ENCODE measurements at regions of chr2 and their contacts with region 1.

Region 1: DNA sequence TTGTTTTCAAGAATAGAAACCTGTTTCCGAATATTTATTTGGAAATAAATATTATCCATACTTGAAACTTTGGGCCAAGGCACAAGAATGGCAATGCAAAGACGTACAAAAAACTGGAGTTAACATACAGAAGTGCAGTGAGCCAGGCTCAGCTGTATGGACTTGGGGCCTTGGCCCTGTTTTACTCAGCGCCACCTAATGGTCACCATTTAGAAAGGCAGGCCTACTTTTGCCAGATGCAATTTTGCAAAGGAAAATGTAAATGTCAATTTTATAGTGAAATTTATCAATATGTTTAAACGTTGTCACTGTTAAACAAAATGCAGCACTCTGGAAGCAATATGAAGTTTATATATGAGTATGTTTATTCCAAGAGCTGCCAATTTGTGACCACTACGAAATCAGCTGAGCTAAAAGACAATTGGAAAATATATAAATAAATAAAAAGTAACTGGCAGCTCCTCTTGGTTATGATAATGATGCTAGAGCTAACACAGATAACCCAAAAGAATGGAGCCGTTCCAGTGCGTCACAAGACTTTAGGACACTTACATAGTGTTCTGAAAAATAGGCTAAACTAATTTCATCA is 155.0 kb downstream of the ARHGAP15 start:
- DNase-seq: no peak
- H3K4me3 Mint-ChIP-seq: no peak overlapping the region
- H3K27ac Mint-ChIP-seq: peak overlapping the region; percentile 22
- H3K4me1 Mint-ChIP-seq: peaks cover 13% of the 10 kb centered on the region
- H3K27me3 Mint-ChIP-seq: no peaks in the 10 kb centered on the region

Region 2: DNA sequence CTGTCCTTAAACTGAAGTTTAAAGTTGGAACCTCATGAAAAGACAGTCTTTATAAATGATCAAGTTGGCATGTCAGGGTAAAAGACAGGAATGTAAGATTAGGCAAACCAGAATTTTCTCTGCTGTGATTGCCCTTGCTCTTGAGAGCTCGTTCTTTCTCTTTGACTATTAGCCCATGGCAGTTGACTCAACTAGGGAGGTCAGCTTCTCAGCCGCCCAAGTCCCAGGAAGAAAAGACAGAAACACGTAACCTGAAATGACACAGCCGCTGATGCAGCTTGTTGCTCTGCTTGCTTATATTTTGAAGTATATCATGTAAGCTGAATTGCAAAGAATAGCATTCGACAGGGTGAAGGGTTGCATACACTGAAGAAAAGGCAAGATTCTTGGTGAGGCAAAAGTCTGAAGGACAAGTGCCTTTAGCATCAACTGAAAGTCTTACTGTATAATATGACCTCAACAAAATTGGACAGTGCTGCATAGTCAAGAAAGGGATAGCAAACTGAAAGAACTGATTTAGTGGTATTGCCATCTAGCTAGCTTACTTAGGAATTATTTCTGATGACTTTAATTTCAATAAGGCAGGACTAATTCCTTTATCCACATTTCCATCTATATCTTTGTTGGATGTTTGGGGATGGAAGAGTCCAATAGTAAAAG is 100.2 kb before region 1 on chr2:
- CTCF ChIA-PET with region 1: no interaction called
- POLR2A ChIA-PET with region 1: no interaction called
- DNase-seq: no peak
- H3K4me3 Mint-ChIP-seq: no peak overlapping the region
- H3K27ac Mint-ChIP-seq: no peak overlapping the region
- H3K4me1 Mint-ChIP-seq: peaks cover 23% of the 10 kb centered on the region
- H3K27me3 Mint-ChIP-seq: no peaks in the 10 kb centered on the region

Region 3: GRCh38 chr2:143264851-143265250 is 19.3 kb before region 1 on chr2:
- CTCF ChIA-PET with region 1: interaction called, 19 read pairs
- POLR2A ChIA-PET with region 1: interaction called, 12 read pairs
- DNase-seq: no peak
- H3K4me3 Mint-ChIP-seq: no peak overlapping the region
- H3K27ac Mint-ChIP-seq: no peak overlapping the region
- H3K4me1 Mint-ChIP-seq: peaks cover 45% of the 10 kb centered on the region
- H3K27me3 Mint-ChIP-seq: no peaks in the 10 kb centered on the region

Region 4: DNA sequence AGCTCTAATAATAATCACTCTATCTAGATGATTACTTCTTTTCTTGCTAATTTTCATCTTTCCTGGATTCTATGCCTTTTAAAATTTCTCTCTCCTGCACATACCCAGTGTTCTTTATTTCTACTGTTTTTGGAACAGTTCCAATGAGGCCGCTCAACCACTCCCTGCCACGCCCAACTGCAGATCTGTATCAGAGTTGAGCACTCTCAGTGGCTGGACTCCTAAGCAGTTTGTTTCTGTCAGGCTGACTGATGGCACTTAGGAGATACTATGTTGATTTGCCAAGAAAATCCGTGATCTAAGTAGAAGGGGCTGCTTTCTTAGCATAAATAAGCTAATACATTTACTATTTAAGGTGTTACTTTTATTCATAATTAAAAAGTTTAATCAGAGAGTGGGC is 37.8 kb after region 1 on chr2:
- CTCF ChIA-PET with region 1: no interaction called
- POLR2A ChIA-PET with region 1: no interaction called
- DNase-seq: no peak
- H3K4me3 Mint-ChIP-seq: no peak overlapping the region
- H3K27ac Mint-ChIP-seq: no peak overlapping the region
- H3K4me1 Mint-ChIP-seq: peaks cover 24% of the 10 kb centered on the region
- H3K27me3 Mint-ChIP-seq: no peaks in the 10 kb centered on the region